ENCODE measurements at regions of chr5 and their contacts with region 1.

Region 1: DNA sequence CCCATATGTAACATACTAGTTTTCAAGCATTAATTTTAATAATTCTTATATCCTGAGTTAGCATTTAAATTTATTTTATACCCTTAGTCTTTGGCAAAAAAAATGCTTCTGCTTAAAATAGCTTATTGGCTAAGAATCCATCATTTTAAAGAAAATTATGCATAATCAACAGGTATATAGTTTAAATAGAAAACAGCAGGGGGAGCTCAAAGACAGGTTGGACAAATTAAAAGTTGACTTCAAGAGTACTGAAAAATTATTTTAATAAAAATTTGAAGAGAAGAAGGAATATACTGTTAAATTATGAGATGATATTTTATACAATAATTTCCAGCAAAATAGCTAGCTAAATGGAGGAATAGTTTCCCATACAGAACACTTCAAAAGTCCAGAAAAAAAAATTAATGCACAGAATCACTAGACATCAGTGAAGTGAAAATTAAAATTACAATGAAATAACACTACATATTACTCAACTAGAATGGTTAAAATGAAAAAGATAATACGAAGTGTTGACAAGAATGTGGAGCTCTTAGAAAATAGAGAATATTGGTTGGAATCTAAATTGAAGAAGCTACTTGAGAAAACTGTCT is 387.1 kb downstream of the PDE4D start:
- DNase-seq: no peak
- H3K4me3 Mint-ChIP-seq: no peak overlapping the region
- H3K27ac Mint-ChIP-seq: no peak overlapping the region
- H3K4me1 Mint-ChIP-seq: no peaks in the 10 kb centered on the region
- H3K27me3 Mint-ChIP-seq: no peaks in the 10 kb centered on the region

Region 2: GRCh38 chr5:59660737-59661136 is 154.4 kb after region 1 on chr5:
- CTCF ChIA-PET with region 1: interaction called, 13 read pairs
- intact Hi-C with region 1: loop called (anchors 2 kb)
- DNase-seq: no peak
- H3K4me3 Mint-ChIP-seq: no peak overlapping the region
- H3K27ac Mint-ChIP-seq: no peak overlapping the region
- H3K4me1 Mint-ChIP-seq: peaks cover 5% of the 10 kb centered on the region
- H3K27me3 Mint-ChIP-seq: no peaks in the 10 kb centered on the region

Region 3: GRCh38 chr5:59673438-59674058 is 167.2 kb after region 1 on chr5:
- CTCF ChIA-PET with region 1: interaction called, 22 read pairs
- intact Hi-C with region 1: loop called (anchors 1 kb)
- DNase-seq: no peak
- H3K4me3 Mint-ChIP-seq: no peak overlapping the region
- H3K27ac Mint-ChIP-seq: no peak overlapping the region
- H3K4me1 Mint-ChIP-seq: no peaks in the 10 kb centered on the region
- H3K27me3 Mint-ChIP-seq: no peaks in the 10 kb centered on the region

Region 4: GRCh38 chr5:59760798-59761348 is 254.5 kb after region 1 on chr5:
- CTCF ChIA-PET with region 1: no interaction called
- intact Hi-C with region 1: no loop called
- DNase-seq: peak; percentile 49
- H3K4me3 Mint-ChIP-seq: no peak overlapping the region
- H3K27ac Mint-ChIP-seq: no peak overlapping the region
- H3K4me1 Mint-ChIP-seq: peaks cover 6% of the 10 kb centered on the region
- H3K27me3 Mint-ChIP-seq: peaks cover 6% of the 10 kb centered on the region

Measured in activated naive CD4-positive, alpha-beta T cell treated with anti-CD3 and anti-CD28 coated beads for 36 hours (primary cell).